Thyroid gland (tissue), 4 donors: ENCODE measurements at regions of chr18 and their contacts with region 1.

Region 1: GRCh38 chr18:7559709-7560319 is 7.3 kb upstream of the PTPRM start:
- DNase-seq: no peak
- H3K4me3 ChIP-seq: no peak overlapping the region
- H3K27ac ChIP-seq: no peak overlapping the region
- H3K4me1 ChIP-seq: peaks cover 15 to 16% of the 10 kb centered on the region in 2 donors
- H3K27me3 ChIP-seq: no peaks in the 10 kb centered on the region
- CTCF ChIP-seq: no peak
- POLR2A ChIP-seq: no peak

Region 2: GRCh38 chr18:7329016-7329415 is 230.8 kb before region 1 on chr18:
- intact Hi-C with region 1: no loop called
- DNase-seq: no peak
- H3K4me3 ChIP-seq: no peak overlapping the region
- H3K27ac ChIP-seq: no peak overlapping the region
- H3K4me1 ChIP-seq: no peaks in the 10 kb centered on the region
- H3K27me3 ChIP-seq: no peaks in the 10 kb centered on the region
- CTCF ChIP-seq: no peak
- POLR2A ChIP-seq: no peak

Region 3: DNA sequence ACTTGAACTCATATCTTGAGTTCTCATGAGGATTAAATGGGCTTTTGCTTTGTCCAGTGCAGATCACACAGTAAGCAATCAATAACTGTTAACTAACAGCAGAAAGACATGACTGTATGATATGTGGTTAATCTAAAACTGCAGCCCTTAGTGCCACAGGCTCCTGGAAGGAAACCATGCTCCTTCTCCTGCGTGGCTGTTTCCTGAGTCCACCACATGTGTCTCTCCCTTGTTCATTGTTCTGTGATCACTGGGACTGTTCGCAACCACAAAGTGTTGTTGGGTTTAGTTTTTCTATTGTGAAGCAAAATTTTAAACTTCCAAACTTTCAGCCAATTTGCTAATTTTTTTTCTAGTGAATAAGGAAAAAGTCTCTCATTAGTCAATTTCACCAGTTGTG is 123.6 kb before region 1 on chr18:
- intact Hi-C with region 1: no loop called
- DNase-seq: no peak
- H3K4me3 ChIP-seq: no peak overlapping the region
- H3K27ac ChIP-seq: no peak overlapping the region
- H3K4me1 ChIP-seq: peaks cover 3 to 5% of the 10 kb centered on the region in 2 donors
- H3K27me3 ChIP-seq: no peaks in the 10 kb centered on the region
- CTCF ChIP-seq: no peak
- POLR2A ChIP-seq: no peak

Region 4: DNA sequence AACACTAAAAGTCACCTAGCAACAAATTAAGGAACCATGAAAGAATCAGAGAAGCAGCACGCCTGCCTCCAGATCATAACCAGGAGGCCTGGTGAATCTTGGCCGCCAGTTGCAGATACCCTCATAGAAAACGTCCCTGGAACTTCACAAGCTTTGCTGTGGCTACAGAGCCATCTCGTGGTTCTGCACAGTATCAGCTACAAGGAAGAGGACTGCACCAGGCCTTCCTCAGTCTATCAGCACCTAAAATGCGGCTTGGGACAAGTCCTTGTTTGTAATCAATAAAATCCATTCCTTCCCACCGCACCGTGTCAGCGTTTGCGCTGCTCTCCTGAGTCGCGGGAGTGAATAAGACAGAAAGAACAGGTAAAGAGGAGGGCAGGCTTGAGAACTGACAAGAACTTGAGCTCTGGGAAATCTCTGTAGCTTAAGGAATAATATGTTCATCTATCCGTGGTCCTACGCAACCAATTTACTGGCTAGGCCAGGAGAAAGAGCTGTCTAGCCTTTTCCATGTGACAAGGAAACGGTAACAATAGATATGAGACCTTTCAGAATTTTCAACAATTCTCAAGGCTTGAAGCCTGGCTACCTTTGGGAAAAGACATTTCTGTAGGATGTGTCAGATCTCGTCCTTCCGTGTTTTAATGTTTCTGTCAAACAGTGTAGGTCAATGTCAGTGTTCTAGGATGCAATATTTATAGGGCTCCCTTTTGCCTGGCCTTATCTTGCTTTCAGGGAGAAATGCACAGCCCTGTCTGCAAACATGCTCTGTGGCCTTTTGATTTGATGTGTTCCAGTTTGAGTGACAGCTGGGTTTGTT is 920.9 kb after region 1 on chr18:
- intact Hi-C with region 1: loop called (anchors 10 kb)
- DNase-seq: peak; percentile 45 to 62
- H3K4me3 ChIP-seq: no peak overlapping the region
- H3K27ac ChIP-seq: no peak overlapping the region
- H3K4me1 ChIP-seq: no peaks in the 10 kb centered on the region
- H3K27me3 ChIP-seq: no peaks in the 10 kb centered on the region
- CTCF ChIP-seq: peak in 4 of 6 experiments; percentile 35 to 77 (median 60)
- POLR2A ChIP-seq: no peak